ENCODE measurements at regions of chr2 and their contacts with region 1.

Region 1: GRCh38 chr2:240434728-240435456 is 571 bp upstream of the GPC1 start:
- DNase-seq: peak; percentile 94 to 98
- ATAC-seq: peak; percentile 87
- H3K4me3 ChIP-seq: peak overlapping the region; percentile 71 to 80
- H3K27ac ChIP-seq: peak overlapping the region in 1 of 2 donors; percentile 35
- H3K4me1 ChIP-seq: no peaks in the 10 kb centered on the region
- H3K27me3 ChIP-seq: no peaks in the 10 kb centered on the region

Region 2: GRCh38 chr2:240277073-240277806 is 157.7 kb before region 1 on chr2:
- intact Hi-C with region 1: loop called in 1 of 2 experiments (anchors 5 kb)
- DNase-seq: peak; percentile 77 to 85
- ATAC-seq: no peak
- H3K4me3 ChIP-seq: no peak overlapping the region
- H3K27ac ChIP-seq: no peak overlapping the region
- H3K4me1 ChIP-seq: no peaks in the 10 kb centered on the region
- H3K27me3 ChIP-seq: no peaks in the 10 kb centered on the region

Region 3: GRCh38 chr2:240369801-240370585 is 64.9 kb before region 1 on chr2:
- intact Hi-C with region 1: loop called (anchors 1 to 5 kb)
- DNase-seq: peak; percentile 88 to 93
- ATAC-seq: peak; percentile 67
- H3K4me3 ChIP-seq: no peak overlapping the region
- H3K27ac ChIP-seq: peak overlapping the region; percentile 59 to 94
- H3K4me1 ChIP-seq: no peaks in the 10 kb centered on the region
- H3K27me3 ChIP-seq: no peaks in the 10 kb centered on the region

Region 4: DNA sequence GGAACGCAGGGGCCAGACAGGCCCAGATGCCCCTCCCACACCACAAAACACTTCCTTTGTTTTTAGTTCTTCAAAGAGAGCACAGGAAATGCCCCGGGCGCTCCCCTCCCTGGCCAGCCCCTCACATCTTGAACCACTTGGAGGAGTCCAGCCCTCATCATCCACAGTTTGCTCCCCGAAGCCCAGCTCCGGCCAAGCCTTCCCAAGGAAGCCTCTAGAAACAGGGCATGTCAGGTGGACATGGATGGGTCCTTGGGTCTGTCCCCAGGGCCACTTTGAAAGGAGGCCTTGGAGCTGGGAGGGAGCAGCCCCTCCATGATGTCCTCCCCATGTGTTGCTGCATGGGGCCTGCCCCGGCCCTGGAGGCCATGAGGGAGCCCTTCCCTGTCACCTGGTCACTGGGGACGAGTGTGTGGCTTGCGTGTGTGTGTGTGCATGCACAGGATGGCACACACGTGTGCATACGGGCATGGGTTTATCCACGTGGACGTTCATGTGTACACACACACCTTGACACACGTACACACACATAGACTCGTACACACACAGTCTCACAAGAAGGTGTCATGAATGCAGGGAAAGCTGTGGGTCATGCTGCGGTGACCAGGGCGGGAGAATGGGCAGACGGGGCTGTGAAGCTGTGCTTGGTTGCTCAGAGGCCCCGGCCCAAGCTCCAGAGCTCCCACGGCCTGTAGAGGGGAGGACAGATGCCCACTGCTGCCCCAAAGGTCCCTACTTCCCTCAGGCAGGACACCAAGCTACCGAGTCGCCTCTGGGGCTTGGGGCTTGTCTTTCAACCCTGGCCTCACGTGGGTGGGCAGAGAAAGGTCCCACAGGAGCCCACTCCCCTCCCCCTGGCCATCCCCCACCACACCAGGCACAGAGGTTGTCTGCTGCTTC is 41.9 kb before region 1 on chr2:
- intact Hi-C with region 1: loop called in 1 of 2 experiments (anchors 5 kb)
- DNase-seq: peak; percentile 42 to 64
- ATAC-seq: no peak
- H3K4me3 ChIP-seq: no peak overlapping the region
- H3K27ac ChIP-seq: no peak overlapping the region
- H3K4me1 ChIP-seq: no peaks in the 10 kb centered on the region
- H3K27me3 ChIP-seq: no peaks in the 10 kb centered on the region

Measured in aorta (tissue), 5 donors.